ENCODE measurements at regions of chr10 and their contacts with region 1.

Region 1: DNA sequence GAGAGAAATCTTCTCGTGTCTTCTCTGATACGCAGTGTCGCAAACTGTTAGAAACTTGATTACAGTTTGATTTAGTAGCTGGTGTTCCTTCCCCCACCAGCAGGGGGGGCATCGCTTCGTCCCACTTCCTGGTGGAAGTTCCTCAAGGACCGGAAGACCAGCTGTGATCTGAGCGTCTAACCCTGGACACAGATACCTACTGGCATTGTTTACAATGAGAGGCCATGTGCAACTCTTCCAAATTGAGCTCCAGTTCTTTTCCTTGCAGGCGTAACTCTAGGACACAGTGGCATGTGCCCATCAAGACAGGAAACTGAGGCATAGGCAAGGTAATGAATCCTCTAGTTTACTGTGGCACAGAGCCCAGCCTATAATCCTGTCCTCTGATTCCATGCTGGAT is 219.0 kb downstream of the CCDC3 start:
- DNase-seq: no peak
- H3K4me3 ChIP-seq: no peak overlapping the region
- H3K27ac ChIP-seq: no peak overlapping the region
- H3K4me1 ChIP-seq: peaks cover 0 to 20% (median 18%) of the 10 kb centered on the region in 4 donors
- H3K27me3 ChIP-seq: no peaks in the 10 kb centered on the region
- CTCF ChIP-seq: peak; percentile 75 to 77 (median 75)
- EP300 ChIP-seq: no peak
- POLR2A ChIP-seq: no peak

Region 2: GRCh38 chr10:12902135-12902572 is 119.6 kb after region 1 on chr10:
- intact Hi-C with region 1: loop called (anchors 5 kb)
- DNase-seq: no peak
- H3K4me3 ChIP-seq: no peak overlapping the region
- H3K27ac ChIP-seq: no peak overlapping the region
- H3K4me1 ChIP-seq: peaks cover 0 to 17% (median 11%) of the 10 kb centered on the region in 4 donors
- H3K27me3 ChIP-seq: no peaks in the 10 kb centered on the region
- CTCF ChIP-seq: peak; percentile 71 to 84 (median 79)
- EP300 ChIP-seq: no peak
- POLR2A ChIP-seq: no peak